ENCODE measurements at regions of chr12 and their contacts with region 1.

Region 1: DNA sequence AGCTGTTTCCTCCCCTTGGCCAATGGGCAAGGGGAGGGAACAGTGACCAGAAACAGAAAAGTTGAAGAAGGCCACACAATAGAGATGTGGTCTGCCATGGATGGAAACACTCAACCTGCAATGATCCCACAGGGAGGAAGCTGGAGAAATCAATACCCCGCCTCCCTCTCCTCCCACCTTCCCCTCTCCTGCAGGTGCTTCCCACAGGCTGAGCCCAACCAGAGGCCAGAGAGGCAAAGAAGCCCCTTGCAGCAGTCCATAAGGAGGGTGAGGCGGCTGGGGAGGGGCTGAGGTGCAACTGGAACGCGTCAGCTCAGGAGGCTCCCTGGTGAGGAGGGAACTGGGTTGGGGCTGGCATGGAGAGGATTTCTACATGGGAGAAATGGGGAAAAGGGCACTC is 84.0 kb downstream of the RNF34 start:
- DNase-seq: no peak
- H3K4me3 Mint-ChIP-seq: no peak overlapping the region
- H3K27ac Mint-ChIP-seq: no peak overlapping the region
- H3K4me1 Mint-ChIP-seq: no peaks in the 10 kb centered on the region
- H3K27me3 Mint-ChIP-seq: no peaks in the 10 kb centered on the region

Region 2: GRCh38 chr12:121467115-121467793 is 16.7 kb before region 1 on chr12:
- CTCF ChIA-PET with region 1: interaction called, 20 read pairs
- POLR2A ChIA-PET with region 1: no interaction called
- intact Hi-C with region 1: no loop called
- DNase-seq: peak; percentile 91
- H3K4me3 Mint-ChIP-seq: peak overlapping the region; percentile 29
- H3K27ac Mint-ChIP-seq: peak overlapping the region; percentile 13
- H3K4me1 Mint-ChIP-seq: peaks cover 19% of the 10 kb centered on the region
- H3K27me3 Mint-ChIP-seq: no peaks in the 10 kb centered on the region

Region 3: DNA sequence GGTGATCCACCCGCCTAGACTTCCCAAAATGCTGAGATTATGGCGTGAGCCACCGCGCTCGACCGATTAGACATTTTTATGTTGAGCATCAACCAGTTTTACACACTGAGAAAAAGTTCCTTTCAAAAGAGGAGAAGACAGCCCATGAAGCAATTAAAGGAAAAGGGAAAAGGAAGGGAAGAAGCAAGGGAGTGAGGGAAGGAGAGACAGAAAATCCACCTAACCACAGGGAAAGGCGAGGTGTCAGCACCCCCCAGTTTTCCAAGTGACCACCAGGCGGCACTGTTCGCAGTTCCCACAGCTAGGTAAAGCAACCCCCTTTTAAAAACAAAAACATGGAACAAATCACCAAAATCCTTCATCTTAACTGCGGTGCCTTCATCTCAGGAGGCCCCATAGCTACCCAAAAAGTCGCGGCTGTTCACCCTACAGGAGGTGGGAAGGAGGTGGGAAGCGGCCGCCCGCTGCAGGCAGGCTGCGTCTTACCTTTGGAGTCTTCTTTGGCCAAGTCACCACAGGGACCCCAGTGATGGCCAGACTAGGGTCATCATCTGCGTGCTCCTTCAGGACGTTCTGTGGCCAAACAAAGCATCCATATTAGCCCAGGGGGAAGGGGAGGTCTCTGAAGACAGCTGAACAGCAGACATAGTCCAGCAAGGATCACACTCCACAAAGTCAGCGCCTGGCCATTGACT is 10.3 kb after region 1 on chr12:
- CTCF ChIA-PET with region 1: interaction called, 20 read pairs
- POLR2A ChIA-PET with region 1: no interaction called
- intact Hi-C with region 1: no loop called
- DNase-seq: peak; percentile 72
- H3K4me3 Mint-ChIP-seq: no peak overlapping the region
- H3K27ac Mint-ChIP-seq: no peak overlapping the region
- H3K4me1 Mint-ChIP-seq: peaks cover 3% of the 10 kb centered on the region
- H3K27me3 Mint-ChIP-seq: no peaks in the 10 kb centered on the region